ENCODE measurements at regions of chr2 and their contacts with region 1.

Region 1: DNA sequence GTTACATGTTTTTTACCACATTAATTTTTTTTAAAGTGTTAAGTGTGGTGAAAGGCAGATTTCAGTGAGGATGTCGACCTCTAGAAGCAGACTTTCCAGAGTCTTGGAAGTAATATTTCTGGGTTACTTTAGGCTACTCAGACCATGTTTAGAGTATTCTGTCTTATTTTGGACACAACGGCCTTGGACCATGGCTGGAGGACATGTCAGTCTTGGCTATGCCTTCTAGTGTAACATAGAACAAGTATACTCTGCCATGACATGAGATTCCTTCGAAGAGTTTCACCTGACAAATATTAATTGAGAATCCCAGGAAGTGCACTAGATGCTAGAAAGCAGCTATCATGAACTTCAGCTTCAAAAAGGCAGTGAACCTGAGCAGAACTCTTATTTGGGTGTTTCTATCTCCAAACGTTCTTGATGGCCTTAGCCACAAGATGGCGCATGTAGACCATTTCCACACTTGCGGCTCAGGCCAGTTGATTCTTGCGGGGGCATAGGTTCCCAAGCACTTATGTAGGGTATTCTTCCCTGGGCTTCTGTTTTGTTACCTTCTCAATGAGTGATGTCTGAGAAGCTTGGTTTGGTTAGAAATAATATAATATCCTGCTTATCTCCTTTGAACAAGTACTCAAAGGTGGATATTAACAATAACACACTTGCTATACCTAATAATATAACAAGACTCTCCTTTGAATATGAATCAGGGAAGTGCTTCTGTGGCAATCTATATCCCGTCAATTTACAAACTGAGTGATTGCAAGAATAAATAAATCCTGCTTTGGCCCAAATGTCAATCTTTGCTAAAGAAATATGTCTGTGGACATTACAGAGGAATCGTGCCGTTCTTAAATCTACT is 62.0 kb downstream of the CACNB4 start:
- DNase-seq: no peak
- H3K4me3 ChIP-seq: no peak overlapping the region
- H3K27ac ChIP-seq: no peak overlapping the region
- H3K4me1 ChIP-seq: peaks cover 17 to 42% (median 21%) of the 10 kb centered on the region in 3 donors
- H3K27me3 ChIP-seq: no peaks in the 10 kb centered on the region
- CTCF ChIP-seq: peak; percentile 42 to 80 (median 68)
- POLR2A ChIP-seq: no peak

Region 2: GRCh38 chr2:152115952-152116351 is 79.1 kb after region 1 on chr2:
- intact Hi-C with region 1: loop called (anchors 10 kb)
- DNase-seq: no peak
- H3K4me3 ChIP-seq: no peak overlapping the region
- H3K27ac ChIP-seq: no peak overlapping the region
- H3K4me1 ChIP-seq: no peaks in the 10 kb centered on the region
- H3K27me3 ChIP-seq: no peaks in the 10 kb centered on the region
- CTCF ChIP-seq: peak in 1 of 6 experiments; percentile 32
- POLR2A ChIP-seq: no peak

Region 3: DNA sequence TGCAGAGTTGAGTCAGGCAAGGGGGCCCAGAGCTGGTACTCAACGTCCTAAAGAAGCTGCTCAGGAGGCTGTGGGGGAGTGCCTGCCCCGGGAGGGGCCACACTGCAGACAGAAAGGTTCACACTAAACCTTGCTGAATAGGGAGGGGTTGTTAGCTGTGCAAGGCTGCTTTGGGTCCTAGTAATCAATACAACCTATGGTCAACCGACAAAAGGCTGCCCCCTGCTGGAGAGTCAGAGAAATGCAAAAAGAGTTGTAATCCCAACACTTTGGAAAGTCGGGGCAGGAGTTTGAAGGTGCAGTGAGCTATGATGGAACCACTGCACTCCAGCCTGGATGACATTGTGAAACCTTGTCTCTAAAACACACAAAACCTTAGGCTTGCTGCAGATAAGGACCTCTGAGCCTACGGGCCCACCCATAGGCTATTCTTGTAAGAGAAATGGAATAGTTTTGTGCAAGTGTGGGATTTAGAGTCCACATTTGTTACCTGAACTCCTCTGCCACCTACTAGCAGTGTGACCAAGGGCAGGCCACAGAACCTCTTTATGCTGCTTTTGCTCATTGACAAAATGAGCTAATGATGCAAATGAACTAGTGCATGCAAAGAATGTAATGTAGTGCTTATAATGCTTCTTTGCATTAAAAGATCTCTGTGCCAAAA is 598.9 kb after region 1 on chr2:
- intact Hi-C with region 1: loop called (anchors 10 kb)
- DNase-seq: no peak
- H3K4me3 ChIP-seq: no peak overlapping the region
- H3K27ac ChIP-seq: no peak overlapping the region
- H3K4me1 ChIP-seq: no peaks in the 10 kb centered on the region
- H3K27me3 ChIP-seq: no peaks in the 10 kb centered on the region
- CTCF ChIP-seq: peak; percentile 72 to 90 (median 78)
- POLR2A ChIP-seq: no peak